HCT116 (cell line): ENCODE measurements at regions of chrX and their contacts with region 1.

Region 1: GRCh38 chrX:47030339-47030738 is 47.9 kb upstream of the RGN start:
- DNase-seq: peak; percentile 51
- ATAC-seq: 0 out of 2 replicates have a peak, but pooled peaks have one; percentile 38
- H3K4me3 ChIP-seq: no peak overlapping the region
- H3K27ac ChIP-seq: no peak overlapping the region
- H3K4me1 ChIP-seq: no peaks in the 10 kb centered on the region
- H3K27me3 ChIP-seq: no peaks in the 10 kb centered on the region
- CTCF ChIP-seq: peak; percentile 32 to 58 (median 53); a peak in 4 of 6 replicates
- POLR2A ChIP-seq: no peak
- RAD21 ChIP-seq: peak; percentile 68

Region 2: GRCh38 chrX:46803140-46803539 is 227.2 kb before region 1 on chrX:
- CTCF ChIA-PET with region 1: no interaction called
- POLR2A ChIA-PET with region 1: no interaction called
- RAD21 ChIA-PET with region 1: no interaction called
- intact Hi-C with region 1: loop called (anchors 1 kb)
- DNase-seq: no peak
- ATAC-seq: peak; percentile 73
- H3K4me3 ChIP-seq: no peak overlapping the region
- H3K27ac ChIP-seq: no peak overlapping the region
- H3K4me1 ChIP-seq: no peaks in the 10 kb centered on the region
- H3K27me3 ChIP-seq: no peaks in the 10 kb centered on the region
- CTCF ChIP-seq: peak; percentile 24 to 39 (median 33); a peak in 3 of 6 replicates
- POLR2A ChIP-seq: no peak
- RAD21 ChIP-seq: peak; percentile 36

Region 3: GRCh38 chrX:46903458-46904242 is 126.7 kb before region 1 on chrX:
- CTCF ChIA-PET with region 1: no interaction called
- POLR2A ChIA-PET with region 1: no interaction called
- RAD21 ChIA-PET with region 1: no interaction called
- intact Hi-C with region 1: loop called (anchors 2 kb)
- DNase-seq: peak; percentile 52
- ATAC-seq: peak; percentile 96
- H3K4me3 ChIP-seq: peak overlapping the region; percentile 41 to 55
- H3K27ac ChIP-seq: no peak overlapping the region
- H3K4me1 ChIP-seq: peaks cover 0 to 8% of the 10 kb centered on the region in 2 experiments; a peak in 1 of 4 replicates
- H3K27me3 ChIP-seq: no peaks in the 10 kb centered on the region
- CTCF ChIP-seq: peak; percentile 53 to 97 (median 60); a peak in 5 of 6 replicates
- POLR2A ChIP-seq: no peak
- RAD21 ChIP-seq: peak; percentile 72

Region 4: GRCh38 chrX:47358387-47359065 is 328.2 kb after region 1 on chrX:
- CTCF ChIA-PET with region 1: no interaction called
- POLR2A ChIA-PET with region 1: no interaction called
- RAD21 ChIA-PET with region 1: no interaction called
- intact Hi-C with region 1: no loop called
- DNase-seq: no peak
- ATAC-seq: no peak
- H3K4me3 ChIP-seq: no peak overlapping the region
- H3K27ac ChIP-seq: no peak overlapping the region
- H3K4me1 ChIP-seq: peaks cover 13 to 22% of the 10 kb centered on the region in 2 experiments
- H3K27me3 ChIP-seq: no peaks in the 10 kb centered on the region
- CTCF ChIP-seq: no peak
- POLR2A ChIP-seq: no peak
- RAD21 ChIP-seq: no peak